HEK293 (cell line): ENCODE measurements at regions of chr15 and their contacts with region 1.

Region 1: GRCh38 chr15:83436458-83437158 is 10.5 kb upstream of the SH3GL3 start:
- H3K4me3 ChIP-seq: no peak overlapping the region
- H3K27ac ChIP-seq: no peak overlapping the region
- H3K4me1 ChIP-seq: no peaks in the 10 kb centered on the region
- CTCF ChIP-seq: peak; percentile 45

Region 2: DNA sequence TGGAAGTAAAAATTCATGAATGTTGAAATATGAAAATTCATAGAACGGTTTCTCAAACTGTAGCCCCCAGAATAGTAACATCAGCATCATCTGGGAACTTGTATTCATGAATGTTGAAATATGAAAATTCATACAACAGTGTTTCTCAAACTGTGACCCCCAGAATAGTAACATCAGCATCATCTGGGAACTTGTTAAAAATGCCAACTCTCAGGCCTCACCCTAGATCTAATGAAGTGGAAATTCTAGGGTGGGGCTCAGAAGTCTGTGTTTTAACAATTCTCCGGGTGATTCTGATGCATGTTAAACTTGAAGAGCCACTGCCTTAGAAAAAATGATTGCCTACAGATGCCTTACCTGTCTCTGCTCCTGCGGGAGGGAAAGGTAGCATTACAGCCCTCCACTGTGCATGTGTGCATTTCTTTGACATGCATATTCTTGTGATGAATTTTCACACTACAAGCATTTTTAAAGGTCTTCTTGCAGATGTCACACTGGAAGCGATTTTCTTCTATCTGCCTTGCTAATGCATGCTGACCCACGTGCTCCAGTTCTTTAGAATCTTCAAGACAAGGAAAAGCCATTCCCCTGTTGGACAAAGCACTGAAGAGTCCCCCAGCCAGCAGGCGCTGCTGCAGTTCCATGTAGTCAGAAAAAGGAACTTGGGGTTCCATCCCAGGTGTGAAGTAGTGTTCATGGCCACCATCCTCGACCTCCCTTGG is 173.9 kb before region 1 on chr15:
- CTCF ChIA-PET with region 1: interaction called, 11 read pairs
- POLR2A ChIA-PET with region 1: no interaction called
- H3K4me3 ChIP-seq: no peak overlapping the region
- H3K27ac ChIP-seq: no peak overlapping the region
- H3K4me1 ChIP-seq: no peaks in the 10 kb centered on the region
- CTCF ChIP-seq: no peak

Region 3: GRCh38 chr15:83404121-83404520 is 32.5 kb before region 1 on chr15:
- CTCF ChIA-PET with region 1: no interaction called
- POLR2A ChIA-PET with region 1: no interaction called
- H3K4me3 ChIP-seq: no peak overlapping the region
- H3K27ac ChIP-seq: no peak overlapping the region
- H3K4me1 ChIP-seq: no peaks in the 10 kb centered on the region
- CTCF ChIP-seq: no peak

Region 4: DNA sequence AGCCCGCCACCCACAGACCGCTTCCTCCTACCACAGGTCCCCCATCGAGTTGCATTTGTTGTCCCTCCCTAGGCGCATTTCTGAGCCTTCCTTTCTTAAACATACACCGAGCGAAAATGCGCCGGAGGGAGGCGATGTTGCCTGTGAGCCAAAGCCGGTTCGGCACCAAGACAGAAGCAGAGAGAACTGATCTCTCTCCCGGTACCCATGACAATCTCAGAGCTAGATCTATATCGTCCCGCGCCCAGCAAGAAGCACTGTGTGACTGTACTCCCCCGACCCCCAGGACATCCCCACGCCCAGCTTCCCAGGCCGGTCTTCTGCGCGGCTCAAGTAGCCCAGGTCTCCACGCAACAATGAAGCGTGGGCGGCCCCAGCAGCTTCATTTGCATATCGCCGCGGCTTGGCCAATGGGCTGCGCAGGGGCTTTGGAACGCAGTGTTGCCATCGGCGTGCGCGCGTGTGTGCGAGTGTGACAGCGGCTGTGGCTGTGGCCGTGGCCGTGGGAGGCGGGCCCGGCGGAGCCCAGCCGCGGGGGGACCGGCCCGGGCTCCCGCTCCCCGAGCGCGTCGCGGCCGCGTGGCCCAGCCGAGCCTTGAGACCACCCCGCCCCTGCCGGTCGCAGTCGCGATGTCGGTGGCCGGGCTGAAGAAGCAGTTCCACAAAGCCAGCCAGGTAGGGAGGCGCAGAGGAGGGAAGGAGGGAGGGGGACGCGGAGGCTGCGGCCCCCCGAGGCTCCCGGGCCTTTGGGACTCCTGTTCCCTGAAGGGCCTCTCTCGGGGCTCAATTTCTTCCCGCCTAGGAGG is 10.5 kb after region 1 on chr15 and contains the start of gene SH3GL3:
- CTCF ChIA-PET with region 1: interaction called, 45 read pairs
- POLR2A ChIA-PET with region 1: no interaction called
- H3K4me3 ChIP-seq: peak within 1 kb of the TSS; percentile 79
- H3K27ac ChIP-seq: peak within 1 kb of the TSS; percentile 73
- H3K4me1 ChIP-seq: peaks cover 20% of the 10 kb centered on the region
- CTCF ChIP-seq: peak; percentile 91

Region 5: GRCh38 chr15:83559310-83559966 is 122.8 kb after region 1 on chr15:
- CTCF ChIA-PET with region 1: interaction called, 247 read pairs
- POLR2A ChIA-PET with region 1: no interaction called
- H3K4me3 ChIP-seq: no peak overlapping the region
- H3K27ac ChIP-seq: no peak overlapping the region
- H3K4me1 ChIP-seq: no peaks in the 10 kb centered on the region
- CTCF ChIP-seq: peak; percentile 69; the same call in 1 of the 2 replicates

Region 6: DNA sequence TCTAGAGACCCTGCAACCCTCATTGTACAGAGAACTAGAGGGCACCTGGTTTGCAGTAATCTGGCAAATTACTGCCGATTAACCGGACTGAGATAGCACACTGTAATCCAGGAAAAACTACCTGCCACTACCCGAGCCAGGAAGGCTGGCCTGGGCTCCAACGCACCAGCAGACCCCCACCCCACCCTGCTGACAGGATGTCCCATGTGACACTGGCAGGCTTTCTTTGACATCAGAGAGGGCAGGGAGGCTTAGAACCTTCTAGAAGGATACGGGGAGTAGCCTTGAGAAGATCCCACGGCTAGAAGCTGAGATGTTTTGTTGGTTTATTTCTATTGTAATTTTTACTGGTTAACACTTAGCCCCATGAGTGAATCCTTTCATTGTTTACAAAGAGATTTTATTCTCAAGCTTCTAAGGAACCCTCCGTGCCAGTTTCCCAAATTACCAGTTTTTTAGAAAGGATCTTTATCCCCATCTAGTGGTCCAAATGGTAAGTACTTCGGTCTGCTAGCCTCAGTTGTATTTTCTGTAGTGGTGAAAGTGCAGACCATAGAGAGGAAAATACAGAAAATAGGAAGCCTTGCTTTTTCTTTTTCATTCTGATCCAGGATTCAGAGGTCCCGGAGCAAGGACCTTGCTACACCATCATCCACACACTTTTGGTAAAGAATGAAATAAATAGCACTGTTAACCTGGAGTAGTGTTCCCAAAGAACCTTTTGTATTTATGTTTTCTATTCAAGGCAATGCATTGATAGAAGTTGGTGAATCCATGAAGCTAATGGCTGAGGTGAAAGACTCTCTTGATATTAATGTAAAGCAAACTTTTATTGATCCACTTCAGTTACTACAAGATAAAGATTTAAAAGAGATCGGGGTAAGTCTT is 135.5 kb after region 1 on chr15:
- CTCF ChIA-PET with region 1: interaction called, 28 read pairs
- POLR2A ChIA-PET with region 1: no interaction called
- H3K4me3 ChIP-seq: no peak overlapping the region
- H3K27ac ChIP-seq: no peak overlapping the region
- H3K4me1 ChIP-seq: no peaks in the 10 kb centered on the region
- CTCF ChIP-seq: no peak